ENCODE measurements at regions of chr9 and their contacts with region 1.

Region 1: DNA sequence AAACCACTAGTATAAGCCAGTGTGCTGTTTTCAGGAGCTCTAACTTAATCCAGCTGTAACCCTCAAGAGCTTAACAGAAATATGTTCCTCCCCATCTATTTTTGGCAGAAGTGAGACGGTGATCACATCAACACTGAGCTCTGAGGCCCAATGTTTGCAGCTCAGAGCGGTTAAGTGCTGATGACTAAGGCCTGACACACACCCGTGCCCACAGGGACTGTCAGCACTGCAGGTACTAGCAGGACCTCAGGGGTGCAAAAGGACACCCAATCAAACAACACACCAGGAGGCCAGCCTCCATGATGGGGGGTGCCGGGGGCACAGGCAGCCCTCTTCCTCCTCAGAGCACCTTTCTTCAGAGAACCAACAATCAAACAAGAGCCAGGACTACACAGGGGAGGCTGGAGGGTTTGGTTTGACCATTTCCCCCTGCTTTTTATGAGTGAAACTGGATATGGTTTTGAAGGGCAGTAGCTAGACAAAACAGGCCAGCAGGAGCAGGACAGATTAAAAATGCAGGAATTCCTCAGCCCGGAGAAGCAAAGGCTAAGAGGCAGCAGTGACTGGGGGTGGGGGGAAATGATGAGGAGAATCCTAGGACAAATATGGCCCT is 61.3 kb downstream of the RAPGEF1 start:
- DNase-seq: peak; percentile 88
- H3K4me3 ChIP-seq: peak overlapping the region; percentile 25; the same call in 1 of the 2 replicates
- H3K27ac ChIP-seq: peak overlapping the region; percentile 85
- H3K27me3 ChIP-seq: no peaks in the 10 kb centered on the region
- CTCF ChIP-seq: 0 out of 2 replicates have a peak, but pooled peaks have one; percentile 2

Region 2: DNA sequence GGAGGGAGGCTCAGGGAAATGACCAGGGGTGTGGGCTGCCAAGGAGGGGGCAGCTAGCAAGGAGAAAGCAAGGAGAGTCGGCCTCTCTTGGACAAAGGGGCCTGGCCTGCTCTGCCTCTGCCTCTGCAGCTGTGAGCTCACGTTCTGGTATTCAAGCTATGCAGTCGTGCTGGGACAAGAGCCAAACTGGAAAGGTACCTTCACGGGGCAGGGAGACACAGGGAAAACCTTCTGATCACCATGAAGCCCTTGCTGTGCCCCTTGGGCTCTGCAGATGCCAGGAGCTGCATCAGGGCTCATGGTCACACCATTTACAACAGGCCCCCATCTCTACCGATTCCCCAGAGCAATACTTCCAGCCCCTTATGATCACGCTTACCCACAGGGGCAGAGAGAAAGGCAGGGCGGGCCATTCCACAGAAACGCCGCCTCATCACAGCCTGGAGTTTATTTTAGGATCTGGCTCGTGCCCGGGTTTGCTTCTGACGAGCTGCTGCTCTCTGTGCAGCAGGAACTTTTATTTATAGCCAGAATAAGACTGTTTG is 70.0 kb before region 1 on chr9:
- CTCF ChIA-PET with region 1: interaction called, 3 read pairs
- POLR2A ChIA-PET with region 1: interaction called, 15 read pairs
- DNase-seq: peak; percentile 68
- H3K4me3 ChIP-seq: peak overlapping the region; percentile 41
- H3K27ac ChIP-seq: peak overlapping the region; percentile 97
- H3K27me3 ChIP-seq: no peaks in the 10 kb centered on the region
- CTCF ChIP-seq: no peak

Region 3: GRCh38 chr9:131656356-131657036 is 22.1 kb before region 1 on chr9:
- CTCF ChIA-PET with region 1: no interaction called
- POLR2A ChIA-PET with region 1: interaction called, 20 read pairs
- DNase-seq: no peak
- H3K4me3 ChIP-seq: no peak overlapping the region
- H3K27ac ChIP-seq: peak overlapping the region; percentile 94
- H3K27me3 ChIP-seq: no peaks in the 10 kb centered on the region
- CTCF ChIP-seq: no peak

Region 4: DNA sequence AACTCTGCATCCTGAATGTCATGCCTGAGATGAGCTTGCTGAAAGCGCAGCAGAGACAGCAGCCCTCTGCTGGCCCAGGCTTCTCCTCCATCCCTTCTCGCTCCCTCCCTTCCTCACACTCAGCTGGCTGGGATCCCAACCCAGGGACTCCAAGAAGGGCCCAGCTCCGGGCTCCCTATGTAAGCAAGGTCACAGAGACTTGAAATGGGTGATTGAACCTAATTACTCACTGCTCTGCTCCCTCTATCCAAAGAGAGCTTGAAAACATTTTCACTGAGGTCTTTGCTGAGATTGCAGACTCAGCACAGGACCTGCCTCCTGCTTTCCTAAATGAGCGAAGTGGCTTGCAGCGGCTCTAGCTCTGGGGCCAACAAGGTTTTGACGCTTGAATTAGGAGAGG is 18.5 kb after region 1 on chr9:
- CTCF ChIA-PET with region 1: interaction called, 11 read pairs
- POLR2A ChIA-PET with region 1: interaction called, 4 read pairs
- DNase-seq: no peak
- H3K4me3 ChIP-seq: no peak overlapping the region
- H3K27ac ChIP-seq: no peak overlapping the region
- H3K27me3 ChIP-seq: no peaks in the 10 kb centered on the region
- CTCF ChIP-seq: peak; percentile 52

Region 5: GRCh38 chr9:131733541-131734061 is 55.0 kb after region 1 on chr9:
- CTCF ChIA-PET with region 1: interaction called, 4 read pairs
- POLR2A ChIA-PET with region 1: interaction called, 22 read pairs
- DNase-seq: peak; percentile 84
- H3K4me3 ChIP-seq: no peak overlapping the region
- H3K27ac ChIP-seq: peak overlapping the region; percentile 81
- H3K27me3 ChIP-seq: no peaks in the 10 kb centered on the region
- CTCF ChIP-seq: no peak